AG04449 (cell line): ENCODE measurements at regions of chr2 and their contacts with region 1.

Region 1: GRCh38 chr2:238970553-238971081 is 122.7 kb downstream of the TWIST2 start:
- DNase-seq: no peak
- H3K4me3 ChIP-seq: no peak overlapping the region
- CTCF ChIP-seq: peak; percentile 99

Region 2: GRCh38 chr2:238847841-238848690 is 122.6 kb before region 1 on chr2 and contains the start of gene TWIST2:
- CTCF ChIA-PET with region 1: interaction called, 13 read pairs
- POLR2A ChIA-PET with region 1: interaction called, 4 read pairs
- DNase-seq: peak; percentile 85
- H3K4me3 ChIP-seq: peak within 1 kb of the TSS; percentile 89
- CTCF ChIP-seq: peak; percentile 26

Region 3: GRCh38 chr2:238945433-238946150 is 25.0 kb before region 1 on chr2:
- CTCF ChIA-PET with region 1: interaction called, 14 read pairs
- POLR2A ChIA-PET with region 1: no interaction called
- DNase-seq: no peak
- H3K4me3 ChIP-seq: no peak overlapping the region
- CTCF ChIP-seq: peak; percentile 87

Region 4: GRCh38 chr2:238954841-238955591 is 15.6 kb before region 1 on chr2:
- CTCF ChIA-PET with region 1: interaction called, 67 read pairs
- POLR2A ChIA-PET with region 1: no interaction called
- DNase-seq: no peak
- H3K4me3 ChIP-seq: no peak overlapping the region
- CTCF ChIP-seq: no peak

Region 5: DNA sequence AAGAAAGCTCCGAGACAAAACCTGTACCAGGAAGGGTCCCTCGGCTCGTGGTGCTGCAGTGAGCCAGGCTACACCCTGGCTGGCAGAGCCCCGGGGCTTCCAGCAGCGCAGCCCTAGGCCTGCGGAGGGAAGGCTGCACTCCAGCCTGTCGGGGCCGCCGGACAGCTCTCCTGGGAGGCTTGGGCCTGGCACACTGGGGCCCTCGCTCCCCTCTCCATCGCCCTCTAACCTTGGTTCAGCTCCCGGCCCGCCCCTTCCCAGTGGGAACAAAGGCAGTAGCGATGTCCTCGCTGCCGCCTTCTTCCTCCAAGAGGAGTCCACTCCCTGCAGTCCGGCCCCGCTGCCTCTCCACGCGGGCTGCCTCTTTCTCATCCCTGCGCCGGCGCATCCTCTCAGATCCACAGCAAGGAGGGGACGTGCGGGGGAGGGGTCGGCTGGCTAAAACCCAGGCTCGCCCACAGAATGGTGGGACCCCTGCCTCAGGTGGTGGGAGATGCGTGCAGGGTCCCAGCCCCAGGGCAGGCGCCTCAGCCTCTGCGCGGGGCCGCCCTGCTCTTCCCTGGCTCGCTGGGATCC is 15.3 kb after region 1 on chr2:
- CTCF ChIA-PET with region 1: interaction called, 21 read pairs
- POLR2A ChIA-PET with region 1: no interaction called
- DNase-seq: no peak
- H3K4me3 ChIP-seq: no peak overlapping the region
- CTCF ChIP-seq: no peak